ENCODE measurements at regions of chr5 and their contacts with region 1.

Region 1: DNA sequence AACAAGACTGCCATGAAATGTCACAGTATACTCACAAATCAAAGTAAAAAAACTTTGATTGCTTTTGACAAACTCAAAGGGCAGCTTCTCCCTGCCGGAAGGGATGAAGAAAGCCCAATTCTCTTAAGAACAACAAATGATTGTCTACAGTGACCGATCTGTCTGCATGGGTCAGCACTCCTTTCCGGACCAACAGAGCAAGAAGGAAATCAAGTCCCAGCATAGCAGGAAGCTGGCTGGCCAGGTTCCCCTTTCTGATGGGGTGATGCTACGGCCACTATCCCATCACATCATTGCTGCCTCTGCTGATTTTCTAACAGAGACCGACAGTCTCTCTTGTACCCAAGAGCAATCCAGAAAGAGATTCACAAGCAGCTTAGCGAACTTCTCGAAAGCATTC is 692 bp downstream of the C1QTNF3 start:
- DNase-seq: no peak
- H3K4me3 ChIP-seq: no peak overlapping the region
- H3K27me3 ChIP-seq: no peaks in the 10 kb centered on the region
- CTCF ChIP-seq: no peak

Region 2: GRCh38 chr5:34003941-34004340 is 38.4 kb before region 1 on chr5:
- CTCF ChIA-PET with region 1: no interaction called
- POLR2A ChIA-PET with region 1: no interaction called
- DNase-seq: no peak
- H3K4me3 ChIP-seq: no peak overlapping the region
- H3K27me3 ChIP-seq: no peaks in the 10 kb centered on the region
- CTCF ChIP-seq: no peak

Region 3: GRCh38 chr5:34026089-34026761 is 16.1 kb before region 1 on chr5:
- CTCF ChIA-PET with region 1: interaction called, 12 read pairs
- POLR2A ChIA-PET with region 1: interaction called, 3 read pairs
- DNase-seq: no peak
- H3K4me3 ChIP-seq: no peak overlapping the region
- H3K27me3 ChIP-seq: no peaks in the 10 kb centered on the region
- CTCF ChIP-seq: no peak